ENCODE measurements at regions of chr3 and their contacts with region 1.

Region 1: GRCh38 chr3:112395171-112395895 is 62.4 kb downstream of the CD200 start:
- DNase-seq: no peak
- ATAC-seq: no peak

Region 2: DNA sequence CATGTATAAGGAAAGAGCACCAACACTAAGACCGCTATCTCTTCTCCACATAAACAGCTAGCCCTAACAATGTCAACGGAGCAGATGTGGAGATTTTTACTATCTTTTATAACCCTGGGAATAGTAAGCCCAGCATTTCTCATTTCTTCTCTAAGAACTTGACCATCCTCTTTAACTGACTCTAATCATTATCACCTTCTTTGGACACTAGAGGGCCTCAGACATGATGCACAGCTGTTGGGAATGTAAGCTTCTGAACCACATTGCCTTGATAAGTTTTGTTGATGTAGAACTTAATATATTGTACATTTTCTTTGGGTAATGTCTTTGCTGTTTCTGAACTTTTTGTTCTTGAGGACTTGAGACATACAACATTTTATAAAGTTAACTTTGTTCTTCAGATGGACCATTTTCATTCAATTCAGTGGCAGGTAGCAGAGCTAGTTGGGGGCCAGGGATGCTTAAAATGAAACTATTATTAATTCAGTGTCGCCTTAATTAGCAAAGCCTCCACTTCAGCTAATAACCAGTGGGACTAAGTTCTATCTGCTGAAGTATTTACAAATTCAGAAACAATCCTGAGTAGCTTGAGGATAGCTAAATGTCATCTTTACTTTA is 406.2 kb before region 1 on chr3:
- intact Hi-C with region 1: no loop called
- DNase-seq: no peak
- ATAC-seq: peak; percentile 67

Region 3: GRCh38 chr3:112364291-112364690 is 31.0 kb before region 1 on chr3:
- intact Hi-C with region 1: loop called (anchors 5 kb)
- DNase-seq: no peak
- ATAC-seq: no peak